ENCODE measurements at regions of chr6 and their contacts with region 1.

Region 1: DNA sequence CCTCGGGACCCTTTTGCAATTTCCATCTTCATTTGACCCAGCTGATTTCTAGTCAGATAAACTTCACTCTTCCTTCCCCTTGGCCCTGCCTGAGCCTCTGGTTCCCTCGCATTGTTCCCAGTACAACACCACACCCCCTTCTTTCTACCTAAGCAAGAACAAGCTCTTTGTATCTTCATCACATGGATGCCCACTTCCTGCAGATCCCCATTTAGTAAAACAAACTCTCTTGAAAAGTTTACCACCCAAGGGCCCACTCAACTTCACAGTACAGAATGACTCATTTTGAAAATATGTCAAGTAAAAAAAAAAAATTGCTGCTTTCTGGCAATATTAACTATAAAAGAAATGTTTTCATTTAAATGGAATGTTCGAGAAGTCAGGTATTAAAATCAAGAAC is 5.2 kb downstream of the FAXC start:
- DNase-seq: no peak
- ATAC-seq: no peak
- H3K4me3 ChIP-seq: no peak overlapping the region
- H3K27ac ChIP-seq: no peak overlapping the region
- H3K4me1 ChIP-seq: peaks cover 6% of the 10 kb centered on the region; the same call in 1 of the 3 replicates
- CTCF ChIP-seq: no peak
- EP300 ChIP-seq: no peak
- POLR2A ChIP-seq: no peak
- RAD21 ChIP-seq: no peak

Region 2: DNA sequence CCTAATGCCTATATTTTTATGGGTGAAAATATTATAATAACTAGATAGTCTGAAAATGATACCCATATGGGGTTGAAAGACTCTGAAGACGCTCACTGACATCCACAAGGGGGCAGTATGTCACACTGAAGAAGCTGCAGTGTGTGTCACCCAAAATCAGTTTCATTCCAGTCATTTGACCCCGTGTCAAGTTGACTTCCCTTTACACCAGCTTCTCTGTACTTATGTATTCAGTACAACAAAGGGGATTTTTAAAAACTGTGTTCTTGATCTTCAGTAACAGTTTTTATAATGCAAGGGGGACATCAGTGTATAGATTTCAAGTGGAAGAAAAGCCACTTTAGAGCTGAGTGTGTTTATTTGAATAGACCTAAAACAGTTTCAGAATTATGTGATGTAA is 14.1 kb before region 1 on chr6:
- CTCF ChIA-PET with region 1: interaction called, 14 read pairs
- POLR2A ChIA-PET with region 1: no interaction called
- DNase-seq: peak; percentile 62 to 66
- ATAC-seq: peak; percentile 87 to 94
- H3K4me3 ChIP-seq: no peak overlapping the region
- H3K27ac ChIP-seq: no peak overlapping the region
- H3K4me1 ChIP-seq: no peaks in the 10 kb centered on the region
- CTCF ChIP-seq: peak; percentile 61
- EP300 ChIP-seq: no peak
- POLR2A ChIP-seq: no peak
- RAD21 ChIP-seq: peak; percentile 37 to 51; a peak in 2 of 5 replicates

Measured in A549 (cell line).